MCF 10A (cell line): ENCODE measurements at regions of chr18 and their contacts with region 1.

Region 1: GRCh38 chr18:45879681-45880655 is 54.5 kb downstream of the SIGLEC15 start:
- DNase-seq: peak; percentile 65
- H3K4me3 Mint-ChIP-seq: no peak overlapping the region
- H3K27ac Mint-ChIP-seq: no peak overlapping the region
- H3K4me1 Mint-ChIP-seq: no peaks in the 10 kb centered on the region
- H3K27me3 Mint-ChIP-seq: no peaks in the 10 kb centered on the region
- CTCF ChIP-seq: peak; percentile 98

Region 2: GRCh38 chr18:45664824-45665763 is 214.9 kb before region 1 on chr18:
- CTCF ChIA-PET with region 1: interaction called, 91 read pairs
- POLR2A ChIA-PET with region 1: no interaction called
- intact Hi-C with region 1: loop called (anchors 1 kb)
- DNase-seq: peak; percentile 74
- H3K4me3 Mint-ChIP-seq: no peak overlapping the region
- H3K27ac Mint-ChIP-seq: no peak overlapping the region
- H3K4me1 Mint-ChIP-seq: peaks cover 11% of the 10 kb centered on the region
- H3K27me3 Mint-ChIP-seq: no peaks in the 10 kb centered on the region
- CTCF ChIP-seq: peak; percentile 93

Region 3: GRCh38 chr18:45690975-45691815 is 188.8 kb before region 1 on chr18:
- CTCF ChIA-PET with region 1: interaction called, 153 read pairs
- POLR2A ChIA-PET with region 1: interaction called, 3 read pairs
- intact Hi-C with region 1: loop called (anchors 1 kb)
- DNase-seq: peak; percentile 86
- H3K4me3 Mint-ChIP-seq: no peak overlapping the region
- H3K27ac Mint-ChIP-seq: no peak overlapping the region
- H3K4me1 Mint-ChIP-seq: peaks cover 10% of the 10 kb centered on the region
- H3K27me3 Mint-ChIP-seq: peaks cover 11% of the 10 kb centered on the region
- CTCF ChIP-seq: peak; percentile 90

Region 4: GRCh38 chr18:45722899-45723298 is 157.1 kb before region 1 on chr18:
- CTCF ChIA-PET with region 1: interaction called, 111 read pairs
- POLR2A ChIA-PET with region 1: interaction called, 3 read pairs
- intact Hi-C with region 1: loop called (anchors 1 kb)
- DNase-seq: peak; percentile 80
- H3K4me3 Mint-ChIP-seq: no peak overlapping the region
- H3K27ac Mint-ChIP-seq: no peak overlapping the region
- H3K4me1 Mint-ChIP-seq: no peaks in the 10 kb centered on the region
- H3K27me3 Mint-ChIP-seq: peaks cover 11% of the 10 kb centered on the region
- CTCF ChIP-seq: peak; percentile 83

Region 5: DNA sequence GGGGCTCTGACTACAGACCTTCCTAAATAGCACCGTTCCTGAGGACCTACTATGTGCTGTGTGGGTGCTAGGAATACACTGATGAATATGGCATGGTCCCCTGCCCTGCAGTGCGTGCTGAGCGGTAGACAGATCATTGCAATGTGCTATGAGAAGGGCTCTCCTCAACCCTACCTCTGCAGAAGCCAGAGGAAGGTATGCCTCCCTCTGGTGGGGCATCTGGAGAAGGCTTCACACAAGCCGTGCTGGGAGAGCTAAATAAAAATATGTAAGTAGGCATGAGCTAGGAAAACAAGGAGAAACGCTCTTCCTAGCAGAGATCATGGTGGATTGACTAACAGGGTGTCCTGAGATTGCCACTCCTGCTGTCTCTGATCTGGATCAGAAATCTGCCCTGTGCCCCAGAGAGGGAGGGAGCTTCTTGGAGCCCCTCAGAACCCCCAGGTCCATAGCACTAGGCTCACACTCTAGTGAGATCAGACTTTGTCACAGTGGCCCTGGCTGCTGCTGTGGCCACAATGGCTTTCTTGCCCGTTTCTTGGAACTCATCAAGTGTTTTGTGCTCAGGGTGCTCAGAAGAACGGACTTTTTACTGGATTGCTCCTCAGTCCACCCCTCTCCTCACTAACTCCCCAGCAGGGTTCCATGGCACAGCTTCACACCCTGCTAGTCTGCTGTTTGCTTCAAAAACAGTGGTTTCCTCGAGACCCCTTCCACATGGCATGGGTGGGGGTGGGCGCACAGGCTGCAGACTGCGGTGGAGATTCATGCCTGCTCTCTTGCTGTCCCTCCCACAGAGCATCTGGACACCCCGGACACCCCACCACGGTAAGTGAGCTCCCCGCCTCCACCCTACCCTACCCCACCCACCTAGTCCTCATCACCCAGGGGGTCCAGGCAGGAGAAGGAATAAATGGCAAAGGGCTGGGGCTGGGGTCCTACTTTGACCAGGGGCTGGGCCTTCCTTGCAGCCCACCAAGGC is 40.3 kb before region 1 on chr18:
- CTCF ChIA-PET with region 1: interaction called, 10 read pairs
- POLR2A ChIA-PET with region 1: no interaction called
- intact Hi-C with region 1: loop called (anchors 1 kb)
- DNase-seq: peak; percentile 71
- H3K4me3 Mint-ChIP-seq: no peak overlapping the region
- H3K27ac Mint-ChIP-seq: no peak overlapping the region
- H3K4me1 Mint-ChIP-seq: no peaks in the 10 kb centered on the region
- H3K27me3 Mint-ChIP-seq: peaks cover 13% of the 10 kb centered on the region
- CTCF ChIP-seq: peak; percentile 48

Region 6: DNA sequence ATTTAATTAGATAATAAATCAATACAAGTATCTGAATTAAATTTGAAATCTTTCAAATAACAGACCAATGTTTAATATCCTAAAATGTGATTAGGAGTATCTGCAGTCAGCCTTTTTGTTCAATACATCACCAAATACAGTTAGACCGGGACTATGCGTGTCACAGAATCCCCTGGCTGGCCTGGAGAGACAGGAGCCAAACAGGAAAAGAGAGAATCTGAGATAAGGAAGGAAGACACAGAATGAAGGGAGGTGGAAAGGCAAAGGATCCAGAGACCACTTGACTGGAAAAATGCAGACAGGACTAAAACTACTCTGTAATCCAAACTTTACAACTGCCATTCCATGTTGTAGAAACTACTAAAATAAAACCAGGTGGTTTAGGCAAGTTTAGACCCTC is 11.8 kb after region 1 on chr18:
- CTCF ChIA-PET with region 1: interaction called, 13 read pairs
- POLR2A ChIA-PET with region 1: no interaction called
- intact Hi-C with region 1: no loop called
- DNase-seq: no peak
- H3K4me3 Mint-ChIP-seq: no peak overlapping the region
- H3K27ac Mint-ChIP-seq: no peak overlapping the region
- H3K4me1 Mint-ChIP-seq: no peaks in the 10 kb centered on the region
- H3K27me3 Mint-ChIP-seq: no peaks in the 10 kb centered on the region
- CTCF ChIP-seq: no peak

Region 7: GRCh38 chr18:45910405-45911023 is 30.5 kb after region 1 on chr18:
- CTCF ChIA-PET with region 1: interaction called, 13 read pairs
- POLR2A ChIA-PET with region 1: no interaction called
- intact Hi-C with region 1: no loop called
- DNase-seq: peak; percentile 61
- H3K4me3 Mint-ChIP-seq: no peak overlapping the region
- H3K27ac Mint-ChIP-seq: no peak overlapping the region
- H3K4me1 Mint-ChIP-seq: no peaks in the 10 kb centered on the region
- H3K27me3 Mint-ChIP-seq: no peaks in the 10 kb centered on the region
- CTCF ChIP-seq: peak; percentile 74